Right ventricle myocardium inferior (tissue), 1 donor: ENCODE measurements at regions of chr18 and their contacts with region 1.

Region 1: GRCh38 chr18:29616867-29617266 is 1425.7 kb downstream of the DSC3 start:
- DNase-seq: no peak
- ATAC-seq: no peak

Region 2: GRCh38 chr18:29523356-29523755 is 93.5 kb before region 1 on chr18:
- intact Hi-C with region 1: no loop called
- DNase-seq: no peak
- ATAC-seq: no peak

Region 3: DNA sequence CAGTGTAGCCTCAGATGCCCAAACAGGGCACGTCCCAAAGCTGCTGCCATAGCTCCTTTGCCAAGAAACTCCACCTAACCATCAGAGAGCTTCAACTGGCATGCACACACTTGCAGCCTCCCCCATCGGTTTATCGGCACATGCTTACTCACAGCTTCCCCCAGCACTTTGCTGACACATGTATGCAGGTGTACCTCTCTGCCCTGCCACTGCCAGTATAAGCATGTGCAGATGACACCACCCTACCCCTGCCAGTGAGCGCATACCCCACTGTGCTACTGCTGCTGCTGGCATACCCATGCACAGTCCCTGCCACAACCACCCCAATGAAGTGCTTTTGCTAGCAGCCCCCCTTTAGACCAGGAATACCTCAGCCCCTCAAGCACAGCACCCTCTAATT is 194.7 kb after region 1 on chr18:
- intact Hi-C with region 1: loop called (anchors 10 kb)
- DNase-seq: no peak
- ATAC-seq: peak; percentile 20

Region 4: GRCh38 chr18:29925573-29925972 is 308.7 kb after region 1 on chr18:
- intact Hi-C with region 1: no loop called
- DNase-seq: no peak
- ATAC-seq: no peak

Region 5: GRCh38 chr18:30016179-30016578 is 399.3 kb after region 1 on chr18:
- intact Hi-C with region 1: no loop called
- DNase-seq: no peak
- ATAC-seq: no peak